IMR-90 (cell line): ENCODE measurements at regions of chr9 and their contacts with region 1.

Region 1: GRCh38 chr9:109192732-109193361 is 25.8 kb upstream of the FRRS1L start:
- DNase-seq: peak; percentile 7
- ATAC-seq: peak; percentile 53
- H3K4me3 ChIP-seq: no peak overlapping the region
- H3K27ac ChIP-seq: no peak overlapping the region
- H3K4me1 ChIP-seq: peaks cover 2% of the 10 kb centered on the region; the same call in 1 of the 2 replicates
- H3K27me3 ChIP-seq: peaks cover 20% of the 10 kb centered on the region
- CTCF ChIP-seq: peak; percentile 39
- POLR2A ChIP-seq: no peak
- RAD21 ChIP-seq: peak; percentile 47; the same call in 1 of the 2 replicates

Region 2: GRCh38 chr9:109143881-109144562 is 48.8 kb before region 1 on chr9:
- CTCF ChIA-PET with region 1: no interaction called
- POLR2A ChIA-PET with region 1: no interaction called
- dilution Hi-C with region 1: no loop called
- in situ Hi-C with region 1: loop called (anchors 5 kb)
- intact Hi-C with region 1: no loop called
- DNase-seq: peak; percentile 13
- ATAC-seq: no peak
- H3K4me3 ChIP-seq: no peak overlapping the region
- H3K27ac ChIP-seq: no peak overlapping the region
- H3K4me1 ChIP-seq: no peaks in the 10 kb centered on the region
- H3K27me3 ChIP-seq: peaks cover 8% of the 10 kb centered on the region
- CTCF ChIP-seq: peak; percentile 21; the same call in 1 of the 2 replicates
- POLR2A ChIP-seq: no peak
- RAD21 ChIP-seq: 0 out of 2 replicates have a peak, but pooled peaks have one; percentile 4

Region 3: GRCh38 chr9:109520478-109521132 is 327.8 kb after region 1 on chr9:
- CTCF ChIA-PET with region 1: no interaction called
- POLR2A ChIA-PET with region 1: no interaction called
- dilution Hi-C with region 1: no loop called
- in situ Hi-C with region 1: no loop called
- intact Hi-C with region 1: loop called (anchors 10 kb)
- DNase-seq: peak; percentile 66
- ATAC-seq: peak; percentile 97
- H3K4me3 ChIP-seq: no peak overlapping the region
- H3K27ac ChIP-seq: no peak overlapping the region
- H3K4me1 ChIP-seq: no peaks in the 10 kb centered on the region
- H3K27me3 ChIP-seq: peaks cover 19% of the 10 kb centered on the region
- CTCF ChIP-seq: peak; percentile 80
- POLR2A ChIP-seq: no peak
- RAD21 ChIP-seq: peak; percentile 79